K562 (cell line): ENCODE measurements at regions of chr21 and their contacts with region 1.

Region 1: DNA sequence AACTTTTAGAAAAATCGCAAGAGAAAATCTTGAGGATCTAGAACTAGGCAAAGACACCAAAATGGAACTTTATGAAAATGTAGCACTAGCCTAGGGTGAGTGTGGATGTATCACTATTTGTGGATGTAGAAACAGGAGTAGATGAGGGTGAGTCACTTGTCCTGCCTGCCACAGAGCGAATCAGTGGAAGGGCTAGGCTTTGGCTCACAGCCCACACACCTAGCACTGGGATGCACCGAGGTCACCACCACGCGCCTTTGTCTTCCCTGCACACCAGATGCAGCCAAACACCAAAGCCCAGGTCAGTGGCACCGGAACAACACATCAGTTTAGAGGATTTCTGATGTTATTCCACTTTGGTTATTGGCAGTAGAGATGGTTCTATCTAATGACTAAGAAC is 38.2 kb downstream of the PKNOX1 start:
- DNase-seq: no peak
- ATAC-seq: peak; percentile 34; the same call in 1 of the 3 replicates
- H3K4me3 ChIP-seq: no peak overlapping the region
- H3K27ac ChIP-seq: no peak overlapping the region
- H3K4me1 ChIP-seq: no peaks in the 10 kb centered on the region
- H3K27me3 ChIP-seq: no peaks in the 10 kb centered on the region
- CTCF ChIP-seq: no peak
- EP300 ChIP-seq: no peak
- POLR2A ChIP-seq: no peak
- RAD21 ChIP-seq: no peak

Region 2: DNA sequence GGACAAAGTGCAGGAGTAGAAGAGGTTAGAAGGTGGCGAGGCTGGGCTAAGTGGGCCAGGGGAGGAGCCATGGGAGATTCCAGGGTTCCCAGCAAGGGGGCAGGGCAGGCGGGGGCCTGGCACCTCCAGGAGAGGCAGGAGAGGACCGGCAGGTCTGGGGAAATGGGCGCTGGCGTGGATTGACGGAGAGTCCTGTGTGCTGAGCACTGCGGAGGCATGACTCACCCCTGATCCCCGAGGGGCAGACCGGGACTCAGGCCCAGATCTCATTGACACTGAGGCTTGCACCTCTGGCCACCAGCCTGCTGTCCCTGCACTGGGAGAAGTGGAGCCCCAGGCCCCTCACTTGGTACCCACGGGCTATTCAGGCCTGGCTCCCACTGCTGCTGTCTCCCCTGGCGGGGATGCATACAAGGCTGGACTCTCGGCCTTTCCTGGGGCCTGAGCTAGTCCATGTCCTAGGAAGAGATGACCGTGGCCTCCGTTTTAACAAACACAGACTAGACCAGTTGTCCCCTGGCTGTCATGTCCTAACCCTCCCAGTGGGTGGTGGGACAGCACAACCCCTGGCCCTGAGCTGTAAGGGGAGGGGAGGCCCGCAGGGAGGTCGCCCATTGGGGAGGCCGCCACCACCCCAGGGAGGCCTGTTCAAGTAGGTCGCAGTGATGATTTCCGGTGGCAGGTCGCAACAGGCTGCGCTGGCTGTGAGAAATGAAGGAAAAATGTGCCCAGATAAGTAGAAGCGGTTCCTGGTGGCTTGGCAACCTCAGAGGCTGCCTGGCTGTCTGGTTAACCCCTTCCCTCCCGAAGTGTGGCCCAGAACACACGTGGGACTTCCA is 1285.4 kb before region 1 on chr21:
- CTCF ChIA-PET with region 1: no interaction called
- POLR2A ChIA-PET with region 1: no interaction called
- in situ Hi-C with region 1: no loop called
- intact Hi-C with region 1: no loop called
- DNase-seq: no peak
- ATAC-seq: peak; percentile 68
- H3K4me3 ChIP-seq: no peak overlapping the region
- H3K27ac ChIP-seq: no peak overlapping the region
- H3K4me1 ChIP-seq: peaks cover 0 to 13% of the 10 kb centered on the region in 2 experiments; a peak in 2 of 5 replicates
- H3K27me3 ChIP-seq: peaks cover 60 to 69% of the 10 kb centered on the region in 2 experiments
- CTCF ChIP-seq: no peak
- EP300 ChIP-seq: no peak
- POLR2A ChIP-seq: no peak
- RAD21 ChIP-seq: no peak

Region 3: GRCh38 chr21:42695697-42696380 is 316.8 kb before region 1 on chr21:
- CTCF ChIA-PET with region 1: no interaction called
- POLR2A ChIA-PET with region 1: no interaction called
- in situ Hi-C with region 1: no loop called
- intact Hi-C with region 1: no loop called
- DNase-seq: no peak
- ATAC-seq: no peak
- H3K4me3 ChIP-seq: no peak overlapping the region
- H3K27ac ChIP-seq: no peak overlapping the region
- H3K4me1 ChIP-seq: no peaks in the 10 kb centered on the region; a peak in 1 of 5 replicates
- H3K27me3 ChIP-seq: peaks cover 25 to 57% of the 10 kb centered on the region in 2 experiments; a peak in 4 of 5 replicates
- CTCF ChIP-seq: no peak
- EP300 ChIP-seq: no peak
- POLR2A ChIP-seq: no peak
- RAD21 ChIP-seq: no peak

Region 4: GRCh38 chr21:42980312-42981213 is 32.0 kb before region 1 on chr21:
- CTCF ChIA-PET with region 1: no interaction called
- POLR2A ChIA-PET with region 1: no interaction called
- in situ Hi-C with region 1: no loop called
- intact Hi-C with region 1: no loop called
- DNase-seq: no peak
- ATAC-seq: peak; percentile 46
- H3K4me3 ChIP-seq: no peak overlapping the region
- H3K27ac ChIP-seq: peak overlapping the region; percentile 25; the same call in 2 of the 3 replicates
- H3K4me1 ChIP-seq: peaks cover 20 to 26% of the 10 kb centered on the region in 2 experiments
- H3K27me3 ChIP-seq: no peaks in the 10 kb centered on the region
- CTCF ChIP-seq: no peak
- EP300 ChIP-seq: no peak
- POLR2A ChIP-seq: no peak
- RAD21 ChIP-seq: no peak

Region 5: GRCh38 chr21:42991992-42992740 is 20.4 kb before region 1 on chr21:
- CTCF ChIA-PET with region 1: no interaction called
- POLR2A ChIA-PET with region 1: no interaction called
- in situ Hi-C with region 1: no loop called
- intact Hi-C with region 1: loop called (anchors 2 kb)
- DNase-seq: peak; percentile 49 to 66 (median 57)
- ATAC-seq: peak; percentile 63
- H3K4me3 ChIP-seq: no peak overlapping the region
- H3K27ac ChIP-seq: peak overlapping the region; percentile 31; the same call in 2 of the 3 replicates
- H3K4me1 ChIP-seq: peaks cover 32 to 36% of the 10 kb centered on the region in 2 experiments
- H3K27me3 ChIP-seq: no peaks in the 10 kb centered on the region
- CTCF ChIP-seq: no peak
- EP300 ChIP-seq: 0 out of 2 replicates have a peak, but pooled peaks have one; percentile 25
- POLR2A ChIP-seq: no peak
- RAD21 ChIP-seq: no peak